ENCODE measurements at regions of chr6 and their contacts with region 1.

Region 1: GRCh38 chr6:26216356-26216885 is 129.2 kb downstream of the HFE start:
- DNase-seq: peak; percentile 93
- ATAC-seq: peak; percentile 68
- H3K4me3 Mint-ChIP-seq: no peak overlapping the region
- H3K27ac Mint-ChIP-seq: no peak overlapping the region
- H3K4me1 Mint-ChIP-seq: peaks cover 28% of the 10 kb centered on the region
- H3K27me3 Mint-ChIP-seq: no peaks in the 10 kb centered on the region

Region 2: DNA sequence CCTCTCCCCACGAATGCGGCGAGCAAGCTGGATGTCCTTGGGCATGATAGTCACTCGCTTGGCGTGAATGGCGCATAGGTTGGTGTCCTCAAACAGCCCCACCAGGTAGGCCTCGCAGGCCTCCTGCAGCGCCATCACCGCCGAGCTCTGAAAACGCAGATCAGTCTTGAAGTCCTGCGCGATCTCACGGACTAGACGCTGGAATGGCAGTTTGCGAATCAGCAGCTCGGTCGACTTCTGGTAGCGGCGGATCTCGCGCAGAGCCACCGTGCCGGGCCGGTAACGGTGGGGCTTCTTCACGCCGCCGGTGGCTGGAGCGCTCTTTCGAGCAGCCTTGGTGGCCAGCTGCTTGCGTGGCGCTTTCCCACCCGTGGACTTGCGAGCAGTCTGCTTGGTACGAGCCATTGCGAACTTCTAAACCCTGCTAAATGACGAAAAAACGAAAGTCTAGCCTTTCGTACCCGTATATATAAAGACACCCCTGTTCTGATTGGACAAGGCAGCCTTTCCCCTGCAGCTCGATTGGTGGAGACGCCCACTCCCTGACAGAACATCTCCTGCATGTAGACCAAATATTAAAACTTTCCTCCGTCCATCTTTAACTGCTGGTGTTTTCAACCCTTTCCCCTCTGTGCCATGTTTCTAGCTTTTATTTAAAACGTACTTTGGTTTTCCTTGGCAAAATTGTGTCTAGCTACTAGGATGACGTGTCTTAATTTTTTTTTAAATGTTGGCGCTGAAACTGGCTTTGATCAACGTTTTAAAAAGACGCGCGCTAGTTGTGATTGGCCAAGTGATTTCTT is 19.4 kb before region 1 on chr6:
- CTCF ChIA-PET with region 1: interaction called, 35 read pairs
- DNase-seq: peak; percentile 91
- ATAC-seq: peak; percentile 43
- H3K4me3 Mint-ChIP-seq: peak overlapping the region; percentile 87
- H3K27ac Mint-ChIP-seq: peak overlapping the region; percentile 98
- H3K4me1 Mint-ChIP-seq: peaks cover 42% of the 10 kb centered on the region
- H3K27me3 Mint-ChIP-seq: no peaks in the 10 kb centered on the region

Region 3: GRCh38 chr6:26204332-26205165 is 11.9 kb before region 1 on chr6:
- CTCF ChIA-PET with region 1: interaction called, 35 read pairs
- DNase-seq: peak; percentile 96
- ATAC-seq: peak; percentile 67
- H3K4me3 Mint-ChIP-seq: no peak overlapping the region
- H3K27ac Mint-ChIP-seq: no peak overlapping the region
- H3K4me1 Mint-ChIP-seq: peaks cover 38% of the 10 kb centered on the region
- H3K27me3 Mint-ChIP-seq: no peaks in the 10 kb centered on the region

Region 4: DNA sequence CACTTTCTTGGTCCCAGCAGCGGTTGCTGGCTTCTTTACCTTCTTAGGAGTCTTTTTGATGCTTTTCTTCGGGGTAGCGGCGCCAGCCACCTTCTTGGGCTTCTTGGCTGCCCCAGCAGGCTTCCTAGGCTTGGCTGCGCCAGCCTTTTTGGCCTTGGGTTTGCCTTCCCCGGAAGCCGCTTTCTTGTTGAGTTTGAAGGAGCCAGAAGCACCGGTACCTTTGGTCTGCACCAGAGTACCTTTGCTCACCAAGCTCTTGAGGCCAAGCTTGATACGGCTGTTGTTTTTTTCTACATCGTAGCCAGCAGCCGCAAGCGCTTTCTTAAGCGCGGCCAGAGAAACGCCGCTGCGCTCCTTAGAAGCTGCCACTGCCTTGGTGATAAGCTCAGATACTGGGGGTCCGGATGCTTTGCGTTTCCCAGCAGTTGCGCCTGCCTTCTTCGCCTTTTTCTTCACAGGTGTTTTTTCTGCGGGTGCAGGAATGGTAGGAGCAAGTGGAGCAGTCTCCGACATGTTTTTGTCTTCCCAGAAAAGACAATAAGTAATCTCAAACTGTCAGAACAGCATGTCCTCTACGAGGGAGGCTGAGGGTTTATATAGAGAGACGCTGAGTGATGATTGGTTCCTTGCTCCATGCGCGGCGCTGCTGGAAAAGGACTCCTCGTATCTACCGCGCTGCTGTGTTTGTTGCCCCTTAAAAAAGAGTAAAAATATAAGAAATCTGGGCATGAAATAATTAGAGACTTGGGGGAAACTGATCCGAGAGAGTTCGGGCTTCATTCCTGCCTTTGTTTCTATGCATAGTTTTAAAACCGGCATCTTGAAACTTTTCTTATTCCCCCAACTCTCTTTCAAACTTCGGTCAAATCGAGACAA is 18.2 kb after region 1 on chr6:
- CTCF ChIA-PET with region 1: interaction called, 27 read pairs
- DNase-seq: peak; percentile 89
- ATAC-seq: peak; percentile 67
- H3K4me3 Mint-ChIP-seq: peak overlapping the region; percentile 82
- H3K27ac Mint-ChIP-seq: peak overlapping the region; percentile 98
- H3K4me1 Mint-ChIP-seq: peaks cover 38% of the 10 kb centered on the region
- H3K27me3 Mint-ChIP-seq: peaks cover 2% of the 10 kb centered on the region

Region 5: GRCh38 chr6:26280407-26280806 is 64.0 kb after region 1 on chr6:
- CTCF ChIA-PET with region 1: no interaction called
- DNase-seq: no peak
- ATAC-seq: no peak
- H3K4me3 Mint-ChIP-seq: no peak overlapping the region
- H3K27ac Mint-ChIP-seq: no peak overlapping the region
- H3K4me1 Mint-ChIP-seq: peaks cover 43% of the 10 kb centered on the region
- H3K27me3 Mint-ChIP-seq: no peaks in the 10 kb centered on the region

Region 6: GRCh38 chr6:26607434-26608230 is 391.2 kb after region 1 on chr6:
- CTCF ChIA-PET with region 1: no interaction called
- DNase-seq: peak; percentile 80
- ATAC-seq: peak; percentile 97
- H3K4me3 Mint-ChIP-seq: peak overlapping the region; percentile 67
- H3K27ac Mint-ChIP-seq: peak overlapping the region; percentile 73
- H3K4me1 Mint-ChIP-seq: peaks cover 12% of the 10 kb centered on the region
- H3K27me3 Mint-ChIP-seq: peaks cover 11% of the 10 kb centered on the region

Measured in activated CD8-positive, alpha-beta memory T cell treated with anti-CD3 and anti-CD28 coated beads, Interleukin-2, amount 10 ng/mL, durations not matched to agents 7 days and 5 days (primary cell).